A673 (cell line): ENCODE measurements at regions of chr14 and their contacts with region 1.

Region 1: DNA sequence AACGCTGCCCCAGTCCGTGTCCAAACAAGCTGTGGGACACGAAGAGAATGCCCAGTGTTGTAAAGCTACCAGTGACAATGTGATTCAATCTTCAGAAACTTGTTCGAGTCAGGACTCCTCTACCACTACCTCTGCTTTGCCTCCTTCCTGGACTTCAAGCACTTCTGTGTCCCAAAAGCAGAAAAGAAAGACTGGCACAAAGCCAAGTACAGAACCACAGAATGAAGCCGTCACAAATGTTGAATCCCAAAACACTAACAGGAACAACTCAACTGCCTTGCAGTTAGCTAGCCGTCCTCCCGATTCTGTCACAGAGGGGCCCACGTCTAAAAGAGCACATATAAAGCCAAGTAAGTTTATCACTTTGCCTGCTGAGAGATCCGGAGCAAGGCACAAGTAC is 284.9 kb downstream of the LRFN5 start:
- DNase-seq: no peak
- H3K4me3 ChIP-seq: no peak overlapping the region
- H3K27ac ChIP-seq: no peak overlapping the region
- H3K4me1 ChIP-seq: no peaks in the 10 kb centered on the region
- H3K27me3 ChIP-seq: no peaks in the 10 kb centered on the region
- CTCF ChIP-seq: no peak

Region 2: GRCh38 chr14:41723204-41723603 is 168.4 kb before region 1 on chr14:
- CTCF ChIA-PET with region 1: no interaction called
- POLR2A ChIA-PET with region 1: no interaction called
- intact Hi-C with region 1: no loop called
- DNase-seq: no peak
- H3K4me3 ChIP-seq: no peak overlapping the region
- H3K27ac ChIP-seq: no peak overlapping the region
- H3K4me1 ChIP-seq: peaks cover 19% of the 10 kb centered on the region
- H3K27me3 ChIP-seq: no peaks in the 10 kb centered on the region
- CTCF ChIP-seq: no peak

Region 3: GRCh38 chr14:41905394-41905964 is 13.9 kb after region 1 on chr14:
- CTCF ChIA-PET with region 1: no interaction called
- POLR2A ChIA-PET with region 1: no interaction called
- intact Hi-C with region 1: loop called (anchors 2 kb)
- DNase-seq: no peak
- H3K4me3 ChIP-seq: no peak overlapping the region
- H3K27ac ChIP-seq: no peak overlapping the region
- H3K4me1 ChIP-seq: peaks cover 6% of the 10 kb centered on the region
- H3K27me3 ChIP-seq: no peaks in the 10 kb centered on the region
- CTCF ChIP-seq: no peak